ENCODE measurements at regions of chr1 and their contacts with region 1.

Region 1: GRCh38 chr1:14733048-14733778 is 134.7 kb downstream of the KAZN start:
- DNase-seq: no peak
- H3K4me3 ChIP-seq: no peak overlapping the region
- H3K27ac ChIP-seq: no peak overlapping the region
- H3K4me1 ChIP-seq: peaks cover 0 to 5% of the 10 kb centered on the region in 2 experiments; a peak in 1 of 4 replicates
- H3K27me3 ChIP-seq: no peaks in the 10 kb centered on the region
- CTCF ChIP-seq: no peak
- EP300 ChIP-seq: no peak
- RAD21 ChIP-seq: no peak

Region 2: DNA sequence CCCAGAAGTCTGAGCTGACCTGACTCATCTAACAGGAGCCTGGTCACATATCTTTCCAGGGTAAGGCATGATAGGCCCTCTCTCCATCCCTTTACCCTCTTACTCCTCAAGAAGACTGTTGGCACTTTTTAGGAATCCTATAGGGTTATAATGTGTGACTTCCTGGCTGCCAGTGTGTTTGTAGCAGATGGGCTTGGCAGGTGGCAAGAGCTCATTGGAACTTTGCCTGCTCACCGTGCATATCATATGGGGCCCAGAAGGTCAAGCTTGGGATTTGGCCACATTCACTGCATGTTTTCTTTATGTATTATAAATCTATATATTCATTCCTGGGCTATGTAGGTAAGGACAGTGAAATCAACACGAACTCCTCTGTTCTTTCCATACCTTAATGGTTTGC is 129.6 kb before region 1 on chr1:
- CTCF ChIA-PET with region 1: interaction called, 11 read pairs
- POLR2A ChIA-PET with region 1: no interaction called
- DNase-seq: no peak
- H3K4me3 ChIP-seq: no peak overlapping the region
- H3K27ac ChIP-seq: no peak overlapping the region
- H3K4me1 ChIP-seq: peaks cover 0 to 4% of the 10 kb centered on the region in 2 experiments; a peak in 1 of 4 replicates
- H3K27me3 ChIP-seq: no peaks in the 10 kb centered on the region
- CTCF ChIP-seq: no peak
- EP300 ChIP-seq: no peak
- RAD21 ChIP-seq: no peak

Region 3: DNA sequence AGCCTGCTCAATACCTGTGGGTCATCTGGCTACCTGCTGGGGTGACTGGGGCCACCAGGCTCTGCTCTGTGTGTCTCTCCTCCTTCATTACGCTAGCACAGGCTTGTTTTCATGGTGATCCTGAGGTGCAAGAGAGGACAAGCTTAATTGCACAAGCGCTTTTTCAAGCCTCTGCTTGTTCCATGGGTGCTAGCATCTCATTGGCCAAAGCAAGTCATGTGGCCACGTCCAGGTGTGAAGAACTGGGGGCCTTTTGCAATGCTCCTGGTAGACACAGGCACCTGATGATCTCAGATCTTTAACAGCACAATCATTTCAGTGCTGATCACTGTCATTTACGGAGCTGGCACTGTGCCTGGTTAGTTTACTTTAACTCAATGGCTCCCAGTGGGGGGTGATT is 20.1 kb before region 1 on chr1:
- CTCF ChIA-PET with region 1: interaction called, 15 read pairs
- POLR2A ChIA-PET with region 1: no interaction called
- DNase-seq: no peak
- H3K4me3 ChIP-seq: no peak overlapping the region
- H3K27ac ChIP-seq: no peak overlapping the region
- H3K4me1 ChIP-seq: no peaks in the 10 kb centered on the region
- H3K27me3 ChIP-seq: no peaks in the 10 kb centered on the region
- CTCF ChIP-seq: no peak
- EP300 ChIP-seq: no peak
- RAD21 ChIP-seq: no peak

Region 4: GRCh38 chr1:14745001-14745720 is 11.9 kb after region 1 on chr1:
- CTCF ChIA-PET with region 1: interaction called, 15 read pairs
- POLR2A ChIA-PET with region 1: no interaction called
- DNase-seq: no peak
- H3K4me3 ChIP-seq: no peak overlapping the region
- H3K27ac ChIP-seq: no peak overlapping the region
- H3K4me1 ChIP-seq: no peaks in the 10 kb centered on the region
- H3K27me3 ChIP-seq: no peaks in the 10 kb centered on the region
- CTCF ChIP-seq: no peak
- EP300 ChIP-seq: no peak
- RAD21 ChIP-seq: no peak

Measured in SK-N-SH (cell line).